HCT116 (cell line): ENCODE measurements at regions of chr1 and their contacts with region 1.

Region 1: GRCh38 chr1:186212544-186213226 is 162.4 kb downstream of the TPR start:
- DNase-seq: peak; percentile 80
- ATAC-seq: peak; percentile 99
- H3K4me3 ChIP-seq: no peak overlapping the region
- H3K27ac ChIP-seq: no peak overlapping the region
- H3K4me1 ChIP-seq: no peaks in the 10 kb centered on the region
- H3K27me3 ChIP-seq: no peaks in the 10 kb centered on the region
- CTCF ChIP-seq: peak; percentile 80 to 91 (median 87)
- POLR2A ChIP-seq: no peak
- RAD21 ChIP-seq: peak; percentile 98

Region 2: GRCh38 chr1:184805667-184806295 is 1406.9 kb before region 1 on chr1:
- CTCF ChIA-PET with region 1: no interaction called
- POLR2A ChIA-PET with region 1: no interaction called
- RAD21 ChIA-PET with region 1: no interaction called
- intact Hi-C with region 1: loop called (anchors 10 kb)
- DNase-seq: peak; percentile 72
- ATAC-seq: peak; percentile 100
- H3K4me3 ChIP-seq: no peak overlapping the region
- H3K27ac ChIP-seq: no peak overlapping the region
- H3K4me1 ChIP-seq: 0 out of 4 replicates have a peak, but pooled peaks cover 0 to 3% of the 10 kb centered on the region in 2 experiments
- H3K27me3 ChIP-seq: no peaks in the 10 kb centered on the region
- CTCF ChIP-seq: peak; percentile 76 to 93 (median 92)
- POLR2A ChIP-seq: no peak
- RAD21 ChIP-seq: peak; percentile 97

Region 3: GRCh38 chr1:185681034-185681633 is 531.6 kb before region 1 on chr1:
- CTCF ChIA-PET with region 1: interaction called, 3 read pairs
- POLR2A ChIA-PET with region 1: no interaction called
- RAD21 ChIA-PET with region 1: no interaction called
- intact Hi-C with region 1: loop called (anchors 1 kb)
- DNase-seq: peak; percentile 45
- ATAC-seq: peak; percentile 85
- H3K4me3 ChIP-seq: no peak overlapping the region
- H3K27ac ChIP-seq: no peak overlapping the region
- H3K4me1 ChIP-seq: no peaks in the 10 kb centered on the region
- H3K27me3 ChIP-seq: no peaks in the 10 kb centered on the region
- CTCF ChIP-seq: peak; percentile 52 to 54 (median 53); a peak in 5 of 6 replicates
- POLR2A ChIP-seq: no peak
- RAD21 ChIP-seq: peak; percentile 79

Region 4: GRCh38 chr1:185720633-185721272 is 491.9 kb before region 1 on chr1:
- CTCF ChIA-PET with region 1: interaction called, 23 read pairs
- POLR2A ChIA-PET with region 1: no interaction called
- RAD21 ChIA-PET with region 1: interaction called in 1 of 2 experiments, 6 read pairs
- intact Hi-C with region 1: loop called (anchors 1 kb)
- DNase-seq: peak; percentile 35
- ATAC-seq: peak; percentile 53; the same call in 1 of the 2 replicates
- H3K4me3 ChIP-seq: no peak overlapping the region
- H3K27ac ChIP-seq: no peak overlapping the region
- H3K4me1 ChIP-seq: peaks cover 0 to 7% of the 10 kb centered on the region in 2 experiments; a peak in 3 of 4 replicates
- H3K27me3 ChIP-seq: no peaks in the 10 kb centered on the region
- CTCF ChIP-seq: peak; percentile 36 to 78 (median 39); a peak in 5 of 6 replicates
- POLR2A ChIP-seq: no peak
- RAD21 ChIP-seq: peak; percentile 62

Region 5: GRCh38 chr1:185813401-185813979 is 399.2 kb before region 1 on chr1:
- CTCF ChIA-PET with region 1: interaction called, 4 read pairs
- POLR2A ChIA-PET with region 1: no interaction called
- RAD21 ChIA-PET with region 1: no interaction called
- intact Hi-C with region 1: loop called (anchors 1 kb)
- DNase-seq: peak; percentile 43
- ATAC-seq: peak; percentile 84
- H3K4me3 ChIP-seq: no peak overlapping the region
- H3K27ac ChIP-seq: no peak overlapping the region
- H3K4me1 ChIP-seq: no peaks in the 10 kb centered on the region
- H3K27me3 ChIP-seq: no peaks in the 10 kb centered on the region
- CTCF ChIP-seq: peak; percentile 50 to 68 (median 54); a peak in 5 of 6 replicates
- POLR2A ChIP-seq: no peak
- RAD21 ChIP-seq: peak; percentile 66

Region 6: DNA sequence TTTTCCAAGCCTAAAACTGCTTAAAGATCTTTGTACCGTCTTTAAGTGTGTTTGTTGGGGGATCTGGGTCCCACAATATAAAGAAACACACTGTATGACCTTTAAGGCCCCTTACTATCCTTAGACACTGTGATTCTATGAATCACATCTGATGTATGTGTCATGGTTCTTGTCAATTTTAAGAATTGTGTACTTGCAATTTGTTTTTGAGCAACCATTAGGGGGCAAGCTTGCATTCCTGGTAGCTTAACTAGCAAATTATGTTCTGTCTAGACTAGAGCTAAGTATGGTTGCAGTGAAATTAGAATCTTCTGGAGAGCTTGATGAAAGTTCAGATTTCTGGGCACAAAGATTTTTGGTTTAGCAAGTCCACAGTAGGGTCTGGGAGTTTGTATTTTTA is 57.1 kb before region 1 on chr1:
- CTCF ChIA-PET with region 1: interaction called, 8 read pairs
- POLR2A ChIA-PET with region 1: no interaction called
- RAD21 ChIA-PET with region 1: interaction called, 3 to 4 read pairs
- intact Hi-C with region 1: loop called (anchors 1 kb)
- DNase-seq: peak; percentile 53
- ATAC-seq: peak; percentile 86
- H3K4me3 ChIP-seq: no peak overlapping the region
- H3K27ac ChIP-seq: no peak overlapping the region
- H3K4me1 ChIP-seq: peaks cover 7 to 16% of the 10 kb centered on the region in 2 experiments; a peak in 3 of 4 replicates
- H3K27me3 ChIP-seq: no peaks in the 10 kb centered on the region
- CTCF ChIP-seq: peak; percentile 57 to 77 (median 74)
- POLR2A ChIP-seq: no peak
- RAD21 ChIP-seq: peak; percentile 83

Region 7: GRCh38 chr1:186283374-186283773 is 70.7 kb after region 1 on chr1:
- CTCF ChIA-PET with region 1: no interaction called
- POLR2A ChIA-PET with region 1: no interaction called
- RAD21 ChIA-PET with region 1: no interaction called
- intact Hi-C with region 1: no loop called
- DNase-seq: no peak
- ATAC-seq: no peak
- H3K4me3 ChIP-seq: no peak overlapping the region
- H3K27ac ChIP-seq: no peak overlapping the region
- H3K4me1 ChIP-seq: 0 out of 4 replicates have a peak, but pooled peaks cover 0 to 3% of the 10 kb centered on the region in 2 experiments
- H3K27me3 ChIP-seq: no peaks in the 10 kb centered on the region
- CTCF ChIP-seq: no peak
- POLR2A ChIP-seq: no peak
- RAD21 ChIP-seq: no peak

Region 8: GRCh38 chr1:186363891-186364290 is 151.2 kb after region 1 on chr1:
- CTCF ChIA-PET with region 1: no interaction called
- POLR2A ChIA-PET with region 1: no interaction called
- RAD21 ChIA-PET with region 1: no interaction called
- intact Hi-C with region 1: no loop called
- DNase-seq: no peak
- ATAC-seq: no peak
- H3K4me3 ChIP-seq: no peak overlapping the region
- H3K27ac ChIP-seq: no peak overlapping the region
- H3K4me1 ChIP-seq: no peaks in the 10 kb centered on the region
- H3K27me3 ChIP-seq: no peaks in the 10 kb centered on the region
- CTCF ChIP-seq: no peak
- POLR2A ChIP-seq: no peak
- RAD21 ChIP-seq: no peak